GM12878 (cell line): ENCODE measurements at regions of chr7 and their contacts with region 1.

Region 1: DNA sequence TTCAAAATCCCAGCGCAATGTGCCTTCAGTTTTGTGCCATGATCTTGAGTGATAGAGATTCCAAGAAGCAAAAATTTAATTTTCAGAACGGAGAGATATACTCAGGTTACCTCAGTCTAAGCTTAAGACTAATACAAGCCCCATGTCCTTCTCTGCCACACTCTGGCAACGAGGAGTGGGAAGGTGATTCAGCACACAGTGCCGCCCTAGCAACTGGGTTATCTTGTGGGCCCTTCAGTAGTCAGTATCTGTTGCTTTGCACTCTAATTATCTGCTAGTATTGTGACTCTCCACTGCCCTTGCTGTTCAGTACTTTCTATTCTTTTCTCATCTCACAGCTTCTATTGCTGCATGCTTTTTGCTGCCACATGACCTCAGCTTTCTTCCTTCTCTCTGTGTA is 39.2 kb upstream of the MKLN1 start:
- DNase-seq: no peak
- ATAC-seq: no peak
- H3K4me3 ChIP-seq: no peak overlapping the region
- H3K27ac ChIP-seq: no peak overlapping the region
- H3K4me1 ChIP-seq: no peaks in the 10 kb centered on the region
- H3K27me3 ChIP-seq: no peaks in the 10 kb centered on the region
- CTCF ChIP-seq: no peak
- EP300 ChIP-seq: no peak
- POLR2A ChIP-seq: no peak
- RAD21 ChIP-seq: no peak

Region 2: GRCh38 chr7:131235489-131236317 is 52.7 kb before region 1 on chr7:
- CTCF ChIA-PET with region 1: no interaction called
- POLR2A ChIA-PET with region 1: no interaction called
- RAD21 ChIA-PET with region 1: no interaction called
- SMC1A ChIA-PET with region 1: no interaction called
- in situ Hi-C with region 1: no loop called
- intact Hi-C with region 1: no loop called
- DNase-seq: no peak
- ATAC-seq: peak; percentile 58
- H3K4me3 ChIP-seq: no peak overlapping the region
- H3K27ac ChIP-seq: peak overlapping the region; percentile 12; the same call in 1 of the 2 replicates
- H3K4me1 ChIP-seq: peaks cover 3% of the 10 kb centered on the region; the same call in 1 of the 2 replicates
- H3K27me3 ChIP-seq: no peaks in the 10 kb centered on the region
- CTCF ChIP-seq: no peak
- EP300 ChIP-seq: no peak
- POLR2A ChIP-seq: no peak
- RAD21 ChIP-seq: no peak

Region 3: DNA sequence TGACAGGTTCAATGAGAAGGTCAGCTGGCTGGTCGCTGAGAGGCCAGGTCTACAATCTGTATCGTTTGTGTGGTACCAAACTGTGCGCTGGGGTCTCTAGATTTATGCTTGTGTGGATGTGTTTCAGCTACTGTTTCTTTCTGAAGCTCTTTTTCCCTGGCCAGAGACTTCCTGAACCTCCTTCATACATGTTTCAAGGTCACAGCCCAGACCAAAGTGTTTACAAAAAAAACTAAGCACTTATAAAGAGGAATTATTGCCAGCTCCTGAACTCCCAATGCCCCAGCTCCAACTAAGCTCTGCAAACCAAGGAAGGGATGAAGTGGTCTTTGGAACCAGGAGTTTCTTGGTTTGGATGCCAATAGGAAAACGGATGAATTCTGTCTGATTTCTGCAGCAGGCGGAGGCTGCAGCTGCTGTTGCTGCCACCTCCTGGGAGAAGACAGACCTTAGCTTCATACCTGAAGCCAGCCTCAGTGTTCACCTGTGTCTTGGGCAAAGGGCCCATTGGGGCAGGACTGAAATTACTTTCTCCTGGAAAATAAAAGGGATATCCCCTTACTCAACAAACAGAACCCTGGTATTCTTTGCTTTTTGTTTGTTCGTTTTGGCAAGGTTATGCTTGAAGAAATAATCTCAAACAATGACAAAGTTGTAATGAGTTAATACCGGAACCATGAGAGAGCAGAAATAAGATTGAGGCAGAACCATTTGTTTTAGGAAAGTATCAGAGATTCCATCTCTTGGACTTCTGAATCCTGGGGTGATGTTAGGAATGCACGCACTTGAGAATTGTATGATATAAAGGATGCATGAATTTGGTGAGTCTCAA is 14.6 kb after region 1 on chr7:
- CTCF ChIA-PET with region 1: interaction called, 12 read pairs
- POLR2A ChIA-PET with region 1: interaction called, 3 read pairs
- RAD21 ChIA-PET with region 1: interaction called, 5 read pairs
- SMC1A ChIA-PET with region 1: interaction called, 5 read pairs
- in situ Hi-C with region 1: no loop called
- intact Hi-C with region 1: no loop called
- DNase-seq: no peak
- ATAC-seq: peak; percentile 81
- H3K4me3 ChIP-seq: no peak overlapping the region
- H3K27ac ChIP-seq: no peak overlapping the region
- H3K4me1 ChIP-seq: no peaks in the 10 kb centered on the region
- H3K27me3 ChIP-seq: no peaks in the 10 kb centered on the region; a peak in 1 of 4 replicates
- CTCF ChIP-seq: peak; percentile 59 to 68 (median 64); a peak in 5 of 6 replicates
- EP300 ChIP-seq: no peak
- POLR2A ChIP-seq: no peak
- RAD21 ChIP-seq: peak; percentile 87

Region 4: DNA sequence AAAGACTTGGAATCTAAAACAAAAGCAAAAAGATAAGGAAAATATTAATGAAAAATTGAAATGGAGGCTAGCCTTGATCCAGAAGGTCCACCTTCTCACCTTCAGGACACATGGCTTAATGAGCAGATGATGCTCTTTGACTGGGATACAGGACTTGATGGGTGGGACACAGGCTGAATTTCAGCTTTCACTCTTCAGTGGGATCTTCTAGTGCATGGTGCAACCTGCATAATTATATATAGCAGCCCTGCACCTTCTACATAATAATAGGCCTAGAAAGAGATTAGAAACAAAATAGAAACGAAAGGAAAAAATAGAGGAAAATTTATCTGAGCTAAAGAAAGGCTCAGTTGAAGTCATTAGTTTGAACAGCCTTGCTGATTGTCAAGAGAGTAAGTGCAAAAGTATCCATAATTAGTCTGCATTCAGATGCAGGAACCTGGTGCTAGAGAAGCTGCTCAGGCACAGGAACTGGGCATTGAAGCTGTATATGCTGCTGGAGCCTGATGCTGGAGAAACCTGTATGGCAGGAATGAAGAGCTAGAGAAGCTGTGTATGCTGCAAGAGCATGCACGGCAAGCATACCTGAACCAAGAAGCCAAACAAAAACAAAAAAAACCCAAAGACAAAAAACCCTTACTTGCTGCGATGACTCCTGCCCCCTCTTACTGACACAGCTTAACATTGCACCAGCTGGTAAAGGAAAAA is 58.6 kb after region 1 on chr7:
- CTCF ChIA-PET with region 1: no interaction called
- POLR2A ChIA-PET with region 1: no interaction called
- RAD21 ChIA-PET with region 1: no interaction called
- SMC1A ChIA-PET with region 1: no interaction called
- in situ Hi-C with region 1: no loop called
- intact Hi-C with region 1: no loop called
- DNase-seq: no peak
- ATAC-seq: peak; percentile 34
- H3K4me3 ChIP-seq: no peak overlapping the region
- H3K27ac ChIP-seq: no peak overlapping the region
- H3K4me1 ChIP-seq: no peaks in the 10 kb centered on the region
- H3K27me3 ChIP-seq: no peaks in the 10 kb centered on the region
- CTCF ChIP-seq: no peak
- EP300 ChIP-seq: no peak
- POLR2A ChIP-seq: no peak
- RAD21 ChIP-seq: no peak